HepG2 (cell line): ENCODE measurements at regions of chr10 and their contacts with region 1.

Region 1: DNA sequence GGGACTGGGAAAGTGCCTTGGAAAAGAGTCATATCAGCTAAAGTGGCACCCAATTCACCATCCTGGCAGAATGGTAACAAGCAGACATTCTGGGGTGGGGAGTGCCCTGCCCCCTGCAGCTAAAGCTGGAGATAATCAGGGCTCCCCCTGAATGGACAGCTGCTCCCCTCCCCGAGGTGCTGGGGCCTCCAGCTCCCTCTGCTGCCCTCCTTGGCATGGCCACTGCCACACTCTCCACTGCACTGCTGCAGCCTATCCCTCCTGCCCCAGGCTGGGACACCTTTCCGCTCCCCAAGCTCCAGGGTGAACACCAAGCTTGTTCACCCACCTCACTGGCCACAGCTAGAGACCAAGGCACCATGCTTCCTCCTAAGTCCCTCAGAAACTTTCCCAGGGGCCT is 9.8 kb upstream of the PARD3 start:
- DNase-seq: no peak
- ATAC-seq: peak; percentile 95
- H3K4me3 ChIP-seq: no peak overlapping the region
- H3K27ac ChIP-seq: no peak overlapping the region
- H3K4me1 ChIP-seq: peaks cover 31% of the 10 kb centered on the region
- H3K27me3 ChIP-seq: no peaks in the 10 kb centered on the region; a peak in 1 of 5 replicates
- CTCF ChIP-seq: peak; percentile 70
- EP300 ChIP-seq: no peak
- POLR2A ChIP-seq: no peak
- RAD21 ChIP-seq: peak; percentile 60

Region 2: DNA sequence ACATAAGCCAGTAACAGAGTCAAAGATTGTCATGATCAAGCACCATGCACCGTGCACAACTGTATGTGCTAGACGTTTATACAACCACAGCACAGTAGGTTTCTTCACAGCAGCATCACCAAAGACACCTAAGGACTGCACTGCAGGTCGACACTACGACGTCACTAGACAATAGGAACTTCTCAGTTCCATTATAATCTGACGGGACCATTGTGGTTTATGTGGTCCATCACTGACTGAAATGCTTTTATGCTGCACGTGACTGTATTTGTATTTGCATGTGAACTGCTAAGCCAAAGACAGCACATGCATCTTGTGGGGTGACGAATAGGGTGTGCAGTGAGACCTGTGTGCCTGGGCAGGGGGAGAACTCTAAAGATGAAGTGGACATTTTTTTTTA is 174.7 kb before region 1 on chr10:
- CTCF ChIA-PET with region 1: interaction called, 5 read pairs
- POLR2A ChIA-PET with region 1: no interaction called
- in situ Hi-C with region 1: loop called (anchors 5 kb)
- intact Hi-C with region 1: loop called (anchors 2 kb)
- DNase-seq: no peak
- ATAC-seq: no peak
- H3K4me3 ChIP-seq: no peak overlapping the region
- H3K27ac ChIP-seq: no peak overlapping the region
- H3K4me1 ChIP-seq: peaks cover 36% of the 10 kb centered on the region
- H3K27me3 ChIP-seq: no peaks in the 10 kb centered on the region
- CTCF ChIP-seq: no peak
- EP300 ChIP-seq: no peak
- POLR2A ChIP-seq: no peak
- RAD21 ChIP-seq: no peak

Region 3: GRCh38 chr10:34655286-34656170 is 169.3 kb before region 1 on chr10:
- CTCF ChIA-PET with region 1: interaction called, 6 read pairs
- POLR2A ChIA-PET with region 1: no interaction called
- in situ Hi-C with region 1: loop called (anchors 5 kb)
- intact Hi-C with region 1: loop called (anchors 2 kb)
- DNase-seq: peak; percentile 63
- ATAC-seq: peak; percentile 33; the same call in 2 of the 3 replicates
- H3K4me3 ChIP-seq: no peak overlapping the region
- H3K27ac ChIP-seq: no peak overlapping the region
- H3K4me1 ChIP-seq: peaks cover 42% of the 10 kb centered on the region
- H3K27me3 ChIP-seq: no peaks in the 10 kb centered on the region
- CTCF ChIP-seq: peak; percentile 70
- EP300 ChIP-seq: no peak
- POLR2A ChIP-seq: no peak
- RAD21 ChIP-seq: peak; percentile 39; the same call in 1 of the 2 replicates

Region 4: GRCh38 chr10:34681933-34682332 is 142.9 kb before region 1 on chr10:
- CTCF ChIA-PET with region 1: interaction called, 4 read pairs
- POLR2A ChIA-PET with region 1: no interaction called
- in situ Hi-C with region 1: no loop called
- intact Hi-C with region 1: loop called (anchors 5 kb)
- DNase-seq: no peak
- ATAC-seq: no peak
- H3K4me3 ChIP-seq: no peak overlapping the region
- H3K27ac ChIP-seq: no peak overlapping the region
- H3K4me1 ChIP-seq: peaks cover 10% of the 10 kb centered on the region
- H3K27me3 ChIP-seq: no peaks in the 10 kb centered on the region
- CTCF ChIP-seq: no peak
- EP300 ChIP-seq: no peak
- POLR2A ChIP-seq: no peak
- RAD21 ChIP-seq: no peak

Region 5: GRCh38 chr10:34723750-34724149 is 101.1 kb before region 1 on chr10:
- CTCF ChIA-PET with region 1: interaction called, 3 read pairs
- POLR2A ChIA-PET with region 1: no interaction called
- in situ Hi-C with region 1: no loop called
- intact Hi-C with region 1: loop called (anchors 5 kb)
- DNase-seq: peak; percentile 42
- ATAC-seq: peak; percentile 71
- H3K4me3 ChIP-seq: no peak overlapping the region
- H3K27ac ChIP-seq: no peak overlapping the region
- H3K4me1 ChIP-seq: peaks cover 44% of the 10 kb centered on the region
- H3K27me3 ChIP-seq: no peaks in the 10 kb centered on the region
- CTCF ChIP-seq: peak; percentile 57
- EP300 ChIP-seq: no peak
- POLR2A ChIP-seq: no peak
- RAD21 ChIP-seq: peak; percentile 53

Region 6: GRCh38 chr10:34996843-34997242 is 172.0 kb after region 1 on chr10:
- CTCF ChIA-PET with region 1: no interaction called
- POLR2A ChIA-PET with region 1: no interaction called
- in situ Hi-C with region 1: no loop called
- intact Hi-C with region 1: no loop called
- DNase-seq: no peak
- ATAC-seq: no peak
- H3K4me3 ChIP-seq: no peak overlapping the region
- H3K27ac ChIP-seq: no peak overlapping the region
- H3K4me1 ChIP-seq: peaks cover 25% of the 10 kb centered on the region
- H3K27me3 ChIP-seq: no peaks in the 10 kb centered on the region
- CTCF ChIP-seq: no peak
- EP300 ChIP-seq: no peak
- POLR2A ChIP-seq: no peak
- RAD21 ChIP-seq: no peak